Left ventricle myocardium inferior (tissue), 1 donor: ENCODE measurements at regions of chr22 and their contacts with region 1.

Region 1: DNA sequence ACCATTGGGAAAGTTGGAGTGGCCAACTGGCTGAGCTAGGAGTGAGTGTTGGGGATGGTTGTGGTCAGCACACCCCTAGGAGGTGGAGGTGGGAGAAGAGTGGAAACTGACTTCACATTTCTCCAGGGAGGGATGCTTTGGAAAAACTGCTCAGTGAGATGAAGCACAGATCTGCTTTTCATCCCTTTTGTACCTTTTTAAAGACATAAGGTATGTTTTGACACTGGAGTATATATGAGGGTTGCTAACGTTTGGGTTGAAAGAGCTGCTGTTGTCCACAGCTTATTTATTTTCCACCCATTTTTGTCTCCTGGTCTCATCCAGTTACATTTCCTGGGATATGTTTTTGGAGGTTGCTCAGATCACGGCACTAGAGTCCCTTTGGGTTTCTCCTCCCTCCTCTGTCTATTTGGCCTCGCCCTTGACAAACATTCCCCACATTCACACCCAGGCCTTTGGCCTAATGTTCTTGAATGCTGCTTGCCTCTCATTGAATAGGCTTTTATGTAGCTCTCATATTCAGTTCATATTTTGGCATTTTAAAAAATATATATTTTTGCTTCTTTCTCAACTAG is 8.3 kb downstream of the SREBF2 start:
- DNase-seq: no peak
- H3K4me3 ChIP-seq: no peak overlapping the region
- H3K27ac ChIP-seq: peak overlapping the region; percentile 27
- H3K4me1 ChIP-seq: peaks cover 82% of the 10 kb centered on the region
- H3K27me3 ChIP-seq: no peaks in the 10 kb centered on the region
- CTCF ChIP-seq: no peak

Region 2: GRCh38 chr22:41876275-41876674 is 35.1 kb after region 1 on chr22:
- intact Hi-C with region 1: loop called (anchors 5 kb)
- DNase-seq: no peak
- H3K4me3 ChIP-seq: no peak overlapping the region
- H3K27ac ChIP-seq: no peak overlapping the region
- H3K4me1 ChIP-seq: peaks cover 18% of the 10 kb centered on the region
- H3K27me3 ChIP-seq: no peaks in the 10 kb centered on the region
- CTCF ChIP-seq: no peak